ENCODE measurements at regions of chr12 and their contacts with region 1.

Region 1: DNA sequence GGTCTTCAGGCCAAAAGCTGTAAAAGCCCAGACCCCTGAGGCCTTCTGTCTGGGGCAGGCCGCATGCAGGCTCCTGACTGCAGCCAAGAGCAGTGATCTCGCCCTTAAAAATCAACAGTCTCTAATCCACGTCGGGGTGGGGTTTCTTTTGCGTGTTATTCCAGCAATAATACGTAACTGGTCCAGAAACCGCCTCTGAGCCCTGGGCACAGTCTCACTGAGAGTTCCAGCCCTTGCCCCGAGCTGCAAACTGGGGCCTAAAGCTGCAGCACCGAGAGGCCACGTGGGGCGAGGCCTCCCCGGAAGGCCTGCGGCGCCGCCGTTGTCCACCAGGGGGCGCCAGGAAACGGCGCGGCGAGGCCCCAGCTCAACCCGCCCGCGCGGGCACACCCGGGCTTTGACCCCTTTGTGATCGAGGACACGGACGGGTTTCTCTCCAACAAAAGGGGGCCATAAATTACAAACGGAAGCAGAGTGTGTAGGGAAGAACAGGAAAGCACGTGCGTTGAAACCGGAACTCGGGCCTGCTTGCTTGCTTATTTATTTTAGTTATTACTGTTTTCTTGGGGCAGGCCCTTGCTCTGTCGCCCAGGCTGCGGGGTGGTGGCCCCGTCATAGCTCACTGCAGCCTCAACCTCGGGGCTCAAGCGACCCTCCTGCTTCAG is 87.2 kb downstream of the NINJ2 start:
- DNase-seq: peak; percentile 80
- H3K4me3 ChIP-seq: peak overlapping the region; percentile 12; the same call in 1 of the 2 replicates
- H3K27ac ChIP-seq: peak overlapping the region; percentile 76
- H3K4me1 ChIP-seq: peaks cover 28% of the 10 kb centered on the region
- H3K27me3 ChIP-seq: no peaks in the 10 kb centered on the region

Region 2: DNA sequence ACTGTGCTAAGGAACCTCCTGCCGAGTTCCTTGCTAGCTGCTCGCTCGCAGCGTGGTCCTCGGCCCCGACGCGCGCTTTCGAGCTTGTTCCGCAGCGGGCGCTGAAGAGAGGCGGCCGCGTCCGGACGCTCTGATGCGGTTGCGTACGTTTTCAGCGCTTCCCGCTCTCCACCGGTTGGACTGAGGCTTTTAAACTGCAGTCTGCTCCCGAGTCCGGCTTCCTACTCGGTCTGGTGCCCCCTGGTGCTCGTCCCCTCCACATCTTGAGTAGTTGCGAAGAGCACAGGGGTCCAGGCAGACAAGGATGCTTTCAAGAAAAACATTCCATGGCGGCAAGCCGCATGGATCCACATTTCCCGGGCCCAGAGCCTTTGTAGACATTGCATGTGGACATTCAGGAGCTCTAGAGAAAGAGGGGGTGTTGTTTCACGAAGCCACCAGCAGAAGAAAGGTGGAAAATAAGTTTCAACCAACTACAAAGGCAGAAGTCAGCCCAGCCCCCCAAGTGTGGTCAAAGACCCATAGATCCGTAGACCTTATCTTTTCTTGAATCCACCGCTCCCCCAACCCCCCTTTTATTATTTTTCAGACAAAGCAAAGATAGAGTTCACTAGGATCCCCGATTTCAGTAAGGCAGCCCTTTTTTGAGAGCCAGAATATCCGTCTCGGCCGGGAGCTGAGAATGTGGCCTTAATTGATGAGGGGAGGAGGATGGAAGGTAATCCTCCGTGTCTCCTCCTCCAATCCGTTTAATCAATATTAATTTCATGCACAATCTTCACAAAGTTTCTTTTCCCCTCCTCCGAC is 175.3 kb after region 1 on chr12:
- in situ Hi-C with region 1: loop called (anchors 10 kb)
- DNase-seq: peak; percentile 99
- H3K4me3 ChIP-seq: peak overlapping the region; percentile 95
- H3K27ac ChIP-seq: peak overlapping the region; percentile 73
- H3K4me1 ChIP-seq: peaks cover 31% of the 10 kb centered on the region
- H3K27me3 ChIP-seq: no peaks in the 10 kb centered on the region

Region 3: GRCh38 chr12:1246637-1247036 is 670.6 kb after region 1 on chr12:
- in situ Hi-C with region 1: no loop called
- DNase-seq: no peak
- H3K4me3 ChIP-seq: no peak overlapping the region
- H3K27ac ChIP-seq: no peak overlapping the region
- H3K4me1 ChIP-seq: peaks cover 10% of the 10 kb centered on the region; the same call in 1 of the 2 replicates
- H3K27me3 ChIP-seq: no peaks in the 10 kb centered on the region